Pancreas (tissue), 10 donors: ENCODE measurements at regions of chr19 and their contacts with region 1.

Region 1: GRCh38 chr19:18063463-18063862 is 23.3 kb downstream of the IL12RB1 start:
- DNase-seq: no peak
- ATAC-seq: no peak
- H3K4me3 ChIP-seq: no peak overlapping the region
- H3K27ac ChIP-seq: no peak overlapping the region
- H3K4me1 ChIP-seq: no peaks in the 10 kb centered on the region
- H3K27me3 ChIP-seq: no peaks in the 10 kb centered on the region
- CTCF ChIP-seq: no peak

Region 2: GRCh38 chr19:17944301-17944700 is 119.2 kb before region 1 on chr19:
- intact Hi-C with region 1: loop called in 1 of 3 experiments (anchors 5 kb)
- DNase-seq: no peak
- ATAC-seq: no peak
- H3K4me3 ChIP-seq: no peak overlapping the region
- H3K27ac ChIP-seq: no peak overlapping the region
- H3K4me1 ChIP-seq: peaks cover 0 to 8% (median 0%) of the 10 kb centered on the region in 3 donors
- H3K27me3 ChIP-seq: no peaks in the 10 kb centered on the region
- CTCF ChIP-seq: no peak

Region 3: GRCh38 chr19:18007044-18007916 is 56.2 kb before region 1 on chr19:
- intact Hi-C with region 1: loop called in 2 of 3 experiments (anchors 1 to 5 kb)
- DNase-seq: peak; percentile 73 to 96 (median 89)
- ATAC-seq: peak; percentile 85 to 93 (median 90)
- H3K4me3 ChIP-seq: peak overlapping the region; percentile 20 to 53 (median 32)
- H3K27ac ChIP-seq: peak overlapping the region; percentile 58 to 89 (median 76)
- H3K4me1 ChIP-seq: peaks cover 0 to 9% (median 0%) of the 10 kb centered on the region in 3 donors
- H3K27me3 ChIP-seq: no peaks in the 10 kb centered on the region
- CTCF ChIP-seq: peak; percentile 94 to 98 (median 96)

Region 4: GRCh38 chr19:18020128-18021085 is 43.1 kb before region 1 on chr19:
- intact Hi-C with region 1: no loop called
- DNase-seq: peak; percentile 76 to 92 (median 86)
- ATAC-seq: peak; percentile 58 to 76 (median 70)
- H3K4me3 ChIP-seq: no peak overlapping the region
- H3K27ac ChIP-seq: peak overlapping the region; percentile 59 to 84 (median 72)
- H3K4me1 ChIP-seq: peaks cover 0 to 23% (median 3%) of the 10 kb centered on the region in 3 donors
- H3K27me3 ChIP-seq: no peaks in the 10 kb centered on the region
- CTCF ChIP-seq: no peak

Region 5: GRCh38 chr19:18117692-18118378 is 54.4 kb after region 1 on chr19:
- intact Hi-C with region 1: no loop called
- DNase-seq: peak; percentile 88 to 98 (median 95)
- ATAC-seq: peak; percentile 84 to 94 (median 92)
- H3K4me3 ChIP-seq: peak overlapping the region; percentile 27 to 61 (median 42)
- H3K27ac ChIP-seq: peak overlapping the region; percentile 22 to 52 (median 43)
- H3K4me1 ChIP-seq: peaks cover 8 to 21% (median 15%) of the 10 kb centered on the region in 3 donors
- H3K27me3 ChIP-seq: no peaks in the 10 kb centered on the region
- CTCF ChIP-seq: no peak

Region 6: GRCh38 chr19:18179957-18180356 is 116.5 kb after region 1 on chr19:
- intact Hi-C with region 1: no loop called
- DNase-seq: no peak
- ATAC-seq: peak in 1 of 4 donors; percentile 19
- H3K4me3 ChIP-seq: no peak overlapping the region
- H3K27ac ChIP-seq: no peak overlapping the region
- H3K4me1 ChIP-seq: peaks cover 0 to under 1% (median 0%) of the 10 kb centered on the region in 3 donors
- H3K27me3 ChIP-seq: no peaks in the 10 kb centered on the region
- CTCF ChIP-seq: no peak